HEK293 (cell line): ENCODE measurements at regions of chr12 and their contacts with region 1.

Region 1: GRCh38 chr12:120228291-120229070 is 27.6 kb upstream of the RPLP0 start:
- H3K4me3 ChIP-seq: no peak overlapping the region
- H3K27ac ChIP-seq: peak overlapping the region; percentile 4; the same call in 1 of the 2 replicates
- H3K4me1 ChIP-seq: peaks cover 42% of the 10 kb centered on the region
- CTCF ChIP-seq: peak; percentile 94

Region 2: GRCh38 chr12:120093592-120094355 is 134.7 kb before region 1 on chr12:
- CTCF ChIA-PET with region 1: no interaction called
- POLR2A ChIA-PET with region 1: no interaction called
- H3K4me3 ChIP-seq: no peak overlapping the region
- H3K27ac ChIP-seq: 0 out of 2 replicates have a peak overlapping the region, but pooled peaks have one; percentile 8
- H3K4me1 ChIP-seq: peaks cover 8% of the 10 kb centered on the region; the same call in 1 of the 2 replicates
- CTCF ChIP-seq: no peak

Region 3: DNA sequence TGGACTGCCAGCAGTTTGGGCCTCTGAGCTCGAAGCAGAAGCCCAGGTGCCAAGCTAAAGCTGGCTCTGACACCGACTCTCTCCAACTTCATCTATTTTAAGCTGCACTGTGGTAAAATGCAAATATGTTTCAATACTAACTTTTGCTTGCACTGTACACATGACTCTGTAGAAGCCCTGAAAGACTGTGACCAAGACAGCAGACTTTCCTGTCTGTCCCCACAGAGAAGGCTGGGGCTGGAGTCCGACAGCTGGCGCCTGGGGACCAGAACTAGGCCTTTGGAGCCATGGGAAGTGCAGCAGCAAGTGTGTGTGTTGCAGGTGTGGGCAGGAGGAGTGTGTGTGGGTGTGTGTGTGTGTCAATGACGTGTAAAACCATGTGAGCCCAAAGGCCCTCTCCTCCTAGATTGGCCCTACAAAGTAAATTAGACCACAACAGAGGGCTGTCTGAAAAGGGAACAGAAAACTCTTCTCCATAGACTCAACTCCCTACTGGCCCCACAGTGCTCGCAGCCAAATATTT is 95.6 kb before region 1 on chr12:
- CTCF ChIA-PET with region 1: no interaction called
- POLR2A ChIA-PET with region 1: no interaction called
- H3K4me3 ChIP-seq: no peak overlapping the region
- H3K27ac ChIP-seq: no peak overlapping the region
- H3K4me1 ChIP-seq: no peaks in the 10 kb centered on the region
- CTCF ChIP-seq: no peak

Region 4: GRCh38 chr12:120249875-120250795 is 21.7 kb after region 1 on chr12:
- CTCF ChIA-PET with region 1: interaction called, 581 read pairs
- POLR2A ChIA-PET with region 1: interaction called, 3 read pairs
- H3K4me3 ChIP-seq: no peak overlapping the region
- H3K27ac ChIP-seq: no peak overlapping the region
- H3K4me1 ChIP-seq: no peaks in the 10 kb centered on the region
- CTCF ChIP-seq: no peak

Region 5: GRCh38 chr12:120265473-120266179 is 37.1 kb after region 1 on chr12 and contains the start of gene PXN:
- CTCF ChIA-PET with region 1: interaction called, 581 read pairs
- POLR2A ChIA-PET with region 1: interaction called, 126 read pairs
- H3K4me3 ChIP-seq: peak within 1 kb of the TSS; percentile 90
- H3K27ac ChIP-seq: peak within 1 kb of the TSS; percentile 65; the same call in 1 of the 2 replicates
- H3K4me1 ChIP-seq: peaks cover 4% of the 10 kb centered on the region; the same call in 1 of the 2 replicates
- CTCF ChIP-seq: peak; percentile 69

Region 6: DNA sequence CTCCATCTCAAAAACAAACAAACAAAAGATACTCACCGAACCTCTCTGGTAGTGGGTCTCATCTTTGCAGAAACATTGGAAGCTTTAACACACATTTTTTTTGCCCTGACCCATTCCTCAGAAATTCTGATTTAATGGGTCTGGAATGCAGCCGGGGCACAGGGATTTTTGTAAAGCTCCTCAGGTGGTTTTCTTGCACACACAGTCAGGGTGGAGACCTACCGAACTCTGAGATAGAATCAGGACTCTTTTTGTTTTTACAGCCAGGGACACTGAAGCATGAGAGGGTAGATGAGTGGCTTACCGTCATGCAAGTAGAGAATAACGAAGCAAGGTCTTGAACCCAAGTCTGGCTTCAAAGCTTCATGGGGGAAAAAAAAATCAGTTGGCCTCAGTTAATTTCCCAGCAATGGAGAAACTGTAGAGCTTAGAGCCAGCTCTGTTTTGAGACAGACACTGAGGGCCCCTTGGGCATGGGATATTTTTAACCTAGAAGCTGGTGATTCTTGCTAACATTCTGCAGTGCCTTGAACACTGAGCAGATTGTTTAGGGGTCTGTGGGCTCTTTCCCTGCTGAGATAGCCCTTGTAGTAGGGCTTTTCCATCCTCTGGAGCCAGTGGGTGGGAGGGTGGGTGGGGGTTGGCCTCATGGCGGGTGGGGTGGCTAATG is 58.5 kb after region 1 on chr12:
- CTCF ChIA-PET with region 1: interaction called, 67 read pairs
- POLR2A ChIA-PET with region 1: interaction called, 194 read pairs
- H3K4me3 ChIP-seq: no peak overlapping the region
- H3K27ac ChIP-seq: no peak overlapping the region
- H3K4me1 ChIP-seq: no peaks in the 10 kb centered on the region
- CTCF ChIP-seq: no peak

Region 7: GRCh38 chr12:120394483-120395367 is 166.2 kb after region 1 on chr12:
- CTCF ChIA-PET with region 1: no interaction called
- POLR2A ChIA-PET with region 1: no interaction called
- H3K4me3 ChIP-seq: no peak overlapping the region
- H3K27ac ChIP-seq: no peak overlapping the region
- H3K4me1 ChIP-seq: no peaks in the 10 kb centered on the region
- CTCF ChIP-seq: no peak

Region 8: GRCh38 chr12:120428597-120429229 is 200.2 kb after region 1 on chr12:
- CTCF ChIA-PET with region 1: interaction called, 21 read pairs
- POLR2A ChIA-PET with region 1: no interaction called
- H3K4me3 ChIP-seq: no peak overlapping the region
- H3K27ac ChIP-seq: no peak overlapping the region
- H3K4me1 ChIP-seq: no peaks in the 10 kb centered on the region
- CTCF ChIP-seq: no peak

Region 9: DNA sequence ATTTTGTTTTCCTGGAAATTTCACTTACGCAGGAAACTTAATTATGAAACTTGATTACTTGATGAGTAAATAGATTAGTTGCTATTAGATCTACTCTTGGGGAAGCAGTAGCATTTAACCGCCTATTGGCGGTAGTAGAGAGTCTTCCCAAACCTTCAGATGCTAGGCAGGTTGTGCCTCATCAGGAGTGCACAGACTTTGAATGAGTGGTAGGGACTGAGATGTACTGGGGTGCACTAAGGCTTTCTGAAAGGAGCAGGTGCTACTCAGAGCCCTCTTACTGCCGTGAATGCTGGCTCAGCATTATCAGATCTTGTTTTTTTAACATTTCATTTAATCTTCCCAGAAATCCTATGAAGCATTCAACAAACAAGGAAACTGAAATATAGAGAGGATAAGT is 225.5 kb after region 1 on chr12:
- CTCF ChIA-PET with region 1: no interaction called
- POLR2A ChIA-PET with region 1: no interaction called
- H3K4me3 ChIP-seq: no peak overlapping the region
- H3K27ac ChIP-seq: no peak overlapping the region
- H3K4me1 ChIP-seq: no peaks in the 10 kb centered on the region
- CTCF ChIP-seq: peak; percentile 53; the same call in 1 of the 2 replicates